HepG2 (cell line): ENCODE measurements at regions of chr3 and their contacts with region 1.

Region 1: DNA sequence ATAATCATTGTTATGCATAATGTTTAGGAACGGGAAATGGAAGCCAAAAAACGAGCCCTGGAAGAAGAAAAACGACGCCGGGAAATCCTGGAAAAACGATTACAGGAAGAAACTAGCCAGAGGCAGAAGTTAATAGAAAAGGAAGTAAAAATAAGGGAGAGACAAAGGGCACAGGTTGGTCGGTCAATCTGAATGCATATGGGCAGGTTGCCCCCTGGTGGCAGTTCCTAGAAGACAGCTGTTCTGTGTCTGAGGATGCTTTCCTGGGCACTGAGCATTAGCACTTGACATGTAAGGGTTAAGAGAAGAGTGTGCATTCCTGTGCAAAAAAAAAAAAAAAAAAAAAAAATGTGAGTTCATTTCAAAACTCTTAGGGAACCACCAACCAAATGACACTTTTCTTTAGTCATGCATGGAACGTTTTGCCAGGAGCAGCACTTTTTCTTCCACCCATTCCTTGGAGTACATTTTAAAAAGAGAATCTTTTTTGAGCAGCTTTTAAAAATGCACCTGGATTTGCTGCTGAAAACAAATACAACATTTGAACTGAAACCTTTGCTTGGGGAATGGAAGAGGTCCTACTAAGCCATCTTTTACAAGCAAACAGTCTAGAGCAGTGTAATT is 11.1 kb upstream of the ABHD10 start:
- DNase-seq: peak; percentile 66
- ATAC-seq: peak; percentile 95
- H3K4me3 ChIP-seq: no peak overlapping the region
- H3K27ac ChIP-seq: no peak overlapping the region
- H3K4me1 ChIP-seq: peaks cover 10% of the 10 kb centered on the region
- H3K27me3 ChIP-seq: no peaks in the 10 kb centered on the region
- CTCF ChIP-seq: peak; percentile 86
- EP300 ChIP-seq: no peak
- POLR2A ChIP-seq: no peak
- RAD21 ChIP-seq: peak; percentile 72

Region 2: GRCh38 chr3:111717601-111718000 is 250.2 kb before region 1 on chr3:
- CTCF ChIA-PET with region 1: interaction called, 79 read pairs
- POLR2A ChIA-PET with region 1: no interaction called
- in situ Hi-C with region 1: loop called (anchors 5 kb)
- intact Hi-C with region 1: loop called (anchors 1 kb)
- DNase-seq: peak; percentile 78
- ATAC-seq: peak; percentile 96
- H3K4me3 ChIP-seq: no peak overlapping the region
- H3K27ac ChIP-seq: no peak overlapping the region
- H3K4me1 ChIP-seq: no peaks in the 10 kb centered on the region
- H3K27me3 ChIP-seq: no peaks in the 10 kb centered on the region
- CTCF ChIP-seq: peak; percentile 94
- EP300 ChIP-seq: no peak
- POLR2A ChIP-seq: no peak
- RAD21 ChIP-seq: peak; percentile 90

Region 3: GRCh38 chr3:111895079-111895478 is 72.7 kb before region 1 on chr3:
- CTCF ChIA-PET with region 1: interaction called, 6 read pairs
- POLR2A ChIA-PET with region 1: no interaction called
- in situ Hi-C with region 1: no loop called
- intact Hi-C with region 1: loop called (anchors 1 kb)
- DNase-seq: peak; percentile 16
- ATAC-seq: peak; percentile 60; the same call in 2 of the 3 replicates
- H3K4me3 ChIP-seq: no peak overlapping the region
- H3K27ac ChIP-seq: no peak overlapping the region
- H3K4me1 ChIP-seq: no peaks in the 10 kb centered on the region
- H3K27me3 ChIP-seq: no peaks in the 10 kb centered on the region
- CTCF ChIP-seq: peak; percentile 28; the same call in 1 of the 2 replicates
- EP300 ChIP-seq: no peak
- POLR2A ChIP-seq: no peak
- RAD21 ChIP-seq: no peak